ENCODE measurements at regions of chr10 and their contacts with region 1.

Region 1: GRCh38 chr10:6580279-6581029 is 378 bp upstream of the PRKCQ start:
- DNase-seq: peak; percentile 98
- ATAC-seq: peak; percentile 66
- H3K4me3 Mint-ChIP-seq: peak overlapping the region; percentile 96
- H3K27ac Mint-ChIP-seq: peak overlapping the region; percentile 97
- H3K4me1 Mint-ChIP-seq: peaks cover 46% of the 10 kb centered on the region
- H3K27me3 Mint-ChIP-seq: no peaks in the 10 kb centered on the region

Region 2: GRCh38 chr10:6416892-6417512 is 163.5 kb before region 1 on chr10:
- POLR2A ChIA-PET with region 1: no interaction called
- DNase-seq: no peak
- ATAC-seq: peak; percentile 63
- H3K4me3 Mint-ChIP-seq: no peak overlapping the region
- H3K27ac Mint-ChIP-seq: no peak overlapping the region
- H3K4me1 Mint-ChIP-seq: peaks cover 6% of the 10 kb centered on the region
- H3K27me3 Mint-ChIP-seq: no peaks in the 10 kb centered on the region

Region 3: DNA sequence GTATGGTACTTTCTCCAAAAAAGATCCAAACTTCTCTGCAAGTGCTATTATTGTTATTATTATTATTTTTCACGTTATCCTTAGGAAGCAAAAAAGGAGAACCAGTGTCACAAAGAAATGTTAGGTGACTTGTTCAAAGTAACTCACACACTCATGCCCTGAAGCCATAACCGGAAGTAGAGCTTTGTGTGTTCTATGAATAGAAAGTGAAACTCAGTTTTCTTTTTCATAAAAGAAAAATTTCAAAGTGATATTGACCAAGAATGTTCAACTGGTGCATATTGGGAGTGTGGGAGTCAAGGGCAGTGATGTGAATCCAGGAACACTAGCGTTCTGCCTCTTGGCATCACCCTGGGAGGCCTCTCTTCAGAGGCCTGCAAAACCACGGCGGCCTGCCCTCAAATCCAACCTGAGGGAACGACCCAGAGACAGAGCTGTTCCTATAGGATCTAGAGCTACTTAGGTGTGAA is 106.5 kb before region 1 on chr10:
- POLR2A ChIA-PET with region 1: interaction called, 31 read pairs
- DNase-seq: peak; percentile 60
- ATAC-seq: peak; percentile 76
- H3K4me3 Mint-ChIP-seq: peak overlapping the region; percentile 82
- H3K27ac Mint-ChIP-seq: peak overlapping the region; percentile 92
- H3K4me1 Mint-ChIP-seq: peaks cover 65% of the 10 kb centered on the region
- H3K27me3 Mint-ChIP-seq: no peaks in the 10 kb centered on the region

Region 4: DNA sequence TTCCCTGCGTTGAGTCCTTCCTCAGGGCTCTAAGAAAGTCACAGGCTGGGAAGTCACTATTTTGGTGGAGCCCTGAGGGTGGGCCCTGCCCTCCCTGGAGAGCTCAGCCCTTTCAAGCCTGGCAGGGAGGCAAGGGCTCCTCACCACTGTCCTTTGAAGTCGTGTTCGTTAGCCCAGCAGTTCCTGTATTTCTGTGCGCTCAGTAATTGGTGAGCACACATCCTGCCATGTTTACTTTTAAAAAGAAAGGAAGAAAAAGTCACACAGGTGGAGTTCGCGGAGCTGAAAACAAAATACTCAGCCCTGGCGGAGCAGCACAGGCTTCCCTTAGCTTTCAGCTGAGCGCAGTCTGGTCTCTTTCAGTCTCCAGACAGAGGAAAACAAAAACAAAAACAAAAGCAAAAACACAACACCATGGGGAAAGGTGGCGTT is 37.4 kb before region 1 on chr10:
- POLR2A ChIA-PET with region 1: interaction called, 25 read pairs
- DNase-seq: peak; percentile 63
- ATAC-seq: peak; percentile 86
- H3K4me3 Mint-ChIP-seq: peak overlapping the region; percentile 95
- H3K27ac Mint-ChIP-seq: peak overlapping the region; percentile 100
- H3K4me1 Mint-ChIP-seq: peaks cover 59% of the 10 kb centered on the region
- H3K27me3 Mint-ChIP-seq: no peaks in the 10 kb centered on the region

Region 5: GRCh38 chr10:6593241-6593671 is 12.8 kb after region 1 on chr10:
- POLR2A ChIA-PET with region 1: interaction called, 382 read pairs
- DNase-seq: peak; percentile 46
- ATAC-seq: peak; percentile 46
- H3K4me3 Mint-ChIP-seq: peak overlapping the region; percentile 77
- H3K27ac Mint-ChIP-seq: peak overlapping the region; percentile 93
- H3K4me1 Mint-ChIP-seq: peaks cover 91% of the 10 kb centered on the region
- H3K27me3 Mint-ChIP-seq: no peaks in the 10 kb centered on the region

Region 6: GRCh38 chr10:6642876-6643275 is 62.4 kb after region 1 on chr10:
- POLR2A ChIA-PET with region 1: interaction called, 10 read pairs
- DNase-seq: no peak
- ATAC-seq: peak; percentile 59
- H3K4me3 Mint-ChIP-seq: peak overlapping the region; percentile 37
- H3K27ac Mint-ChIP-seq: peak overlapping the region; percentile 26
- H3K4me1 Mint-ChIP-seq: peaks cover 34% of the 10 kb centered on the region
- H3K27me3 Mint-ChIP-seq: no peaks in the 10 kb centered on the region

Region 7: DNA sequence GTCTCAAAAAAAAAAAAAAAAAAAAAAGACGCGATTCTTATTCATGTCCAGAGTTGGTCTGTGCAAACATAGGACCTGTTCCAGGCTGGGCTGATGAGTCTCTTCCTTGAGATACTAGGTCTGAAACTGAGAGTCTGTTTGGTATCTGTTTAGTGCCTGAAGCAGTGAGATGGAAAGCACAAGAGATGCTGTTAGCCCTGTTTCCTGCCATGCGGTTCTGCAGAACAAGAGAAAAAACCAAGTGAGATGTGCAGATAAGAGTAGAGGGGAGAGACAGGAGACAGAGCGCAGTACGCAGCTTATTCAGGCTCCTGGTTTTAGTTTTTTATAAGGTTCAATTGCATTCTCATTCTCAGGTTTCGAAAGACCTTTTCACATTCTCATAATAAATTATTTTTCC is 85.4 kb after region 1 on chr10:
- POLR2A ChIA-PET with region 1: interaction called, 11 read pairs
- DNase-seq: no peak
- ATAC-seq: peak; percentile 99
- H3K4me3 Mint-ChIP-seq: peak overlapping the region; percentile 66
- H3K27ac Mint-ChIP-seq: peak overlapping the region; percentile 78
- H3K4me1 Mint-ChIP-seq: peaks cover 22% of the 10 kb centered on the region
- H3K27me3 Mint-ChIP-seq: peaks cover 2% of the 10 kb centered on the region

Measured in activated naive CD8-positive, alpha-beta T cell treated with anti-CD3 and anti-CD28 coated beads, Interleukin-2, amount 10 ng/mL, durations not matched to agents 7 days and 5 days (primary cell).